Activated T-helper 2 cell treated with anti-CD3 and anti-CD28 coated beads, Interferon-gamma antibody, Interleukin-2, Interleukin-4, amounts not matched to agents 10 μg/mL and 5 μg/mL and 100 μg/mL, durations not matched to agents 14 hours and 24 hours and 36 hours (primary cell): ENCODE measurements at regions of chr1 and their contacts with region 1.

Region 1: GRCh38 chr1:199173356-199173755 is 534.5 kb downstream of the PTPRC start:
- DNase-seq: no peak
- H3K4me3 Mint-ChIP-seq: no peak overlapping the region
- H3K27ac Mint-ChIP-seq: peak overlapping the region; percentile 24
- H3K4me1 Mint-ChIP-seq: peaks cover 39% of the 10 kb centered on the region
- H3K27me3 Mint-ChIP-seq: peaks cover 36% of the 10 kb centered on the region

Region 2: GRCh38 chr1:198880818-198881597 is 292.3 kb before region 1 on chr1:
- intact Hi-C with region 1: loop called (anchors 5 kb)
- DNase-seq: no peak
- H3K4me3 Mint-ChIP-seq: no peak overlapping the region
- H3K27ac Mint-ChIP-seq: peak overlapping the region; percentile 49
- H3K4me1 Mint-ChIP-seq: peaks cover 42% of the 10 kb centered on the region
- H3K27me3 Mint-ChIP-seq: no peaks in the 10 kb centered on the region

Region 3: GRCh38 chr1:199041173-199041914 is 132.0 kb before region 1 on chr1:
- intact Hi-C with region 1: loop called (anchors 1 kb)
- DNase-seq: peak; percentile 57
- H3K4me3 Mint-ChIP-seq: peak overlapping the region; percentile 51
- H3K27ac Mint-ChIP-seq: peak overlapping the region; percentile 71
- H3K4me1 Mint-ChIP-seq: peaks cover 44% of the 10 kb centered on the region
- H3K27me3 Mint-ChIP-seq: no peaks in the 10 kb centered on the region

Region 4: DNA sequence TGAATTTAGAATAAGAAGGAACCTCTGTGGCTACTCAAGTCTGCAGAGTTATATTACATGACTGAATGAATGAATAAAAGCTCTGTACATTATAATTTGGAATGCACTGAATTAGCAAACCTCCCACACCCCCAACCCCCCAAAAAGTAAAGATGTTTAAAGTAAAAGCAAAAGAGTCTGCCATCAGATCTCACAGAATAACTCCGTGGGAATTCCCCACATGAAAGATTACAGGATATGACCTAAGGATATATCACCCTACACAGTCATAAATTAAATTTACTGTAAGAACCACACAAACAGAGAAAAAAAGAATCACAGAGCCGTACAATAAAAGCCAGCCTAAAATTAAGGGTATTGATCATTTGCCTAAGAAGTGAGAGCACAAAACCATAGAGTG is 52.8 kb after region 1 on chr1:
- intact Hi-C with region 1: loop called (anchors 1 kb)
- DNase-seq: no peak
- H3K4me3 Mint-ChIP-seq: peak overlapping the region; percentile 6
- H3K27ac Mint-ChIP-seq: peak overlapping the region; percentile 1
- H3K4me1 Mint-ChIP-seq: peaks cover 18% of the 10 kb centered on the region
- H3K27me3 Mint-ChIP-seq: peaks cover 3% of the 10 kb centered on the region

Region 5: GRCh38 chr1:199945591-199945990 is 772.2 kb after region 1 on chr1:
- intact Hi-C with region 1: loop called (anchors 5 kb)
- DNase-seq: no peak
- H3K4me3 Mint-ChIP-seq: no peak overlapping the region
- H3K27ac Mint-ChIP-seq: no peak overlapping the region
- H3K4me1 Mint-ChIP-seq: peaks cover 14% of the 10 kb centered on the region
- H3K27me3 Mint-ChIP-seq: peaks cover 47% of the 10 kb centered on the region